ENCODE measurements at regions of chr16 and their contacts with region 1.

Region 1: GRCh38 chr16:57462209-57462977 is at the start of gene POLR2C:
- DNase-seq: peak; percentile 60 to 95
- H3K4me3 ChIP-seq: peak within 1 kb of the TSS; percentile 93 to 97 (median 96)
- H3K27ac ChIP-seq: no peak within 1 kb of the TSS
- H3K4me1 ChIP-seq: no peaks in the 10 kb centered on the region; a peak in 2 of 7 replicates
- H3K27me3 ChIP-seq: no peaks in the 10 kb centered on the region
- CTCF ChIP-seq: peak; percentile 86 to 97 (median 94)
- EP300 ChIP-seq: peak in 1 of 2 experiments; percentile 51; a peak in 1 of 3 replicates
- POLR2A ChIP-seq: peak; percentile 96 to 97
- RAD21 ChIP-seq: peak; percentile 27 to 55; a peak in 3 of 4 replicates
- total RNA-seq, gene POLR2C: 71.2 and 72.5 TPM in 2 replicates

Region 2: DNA sequence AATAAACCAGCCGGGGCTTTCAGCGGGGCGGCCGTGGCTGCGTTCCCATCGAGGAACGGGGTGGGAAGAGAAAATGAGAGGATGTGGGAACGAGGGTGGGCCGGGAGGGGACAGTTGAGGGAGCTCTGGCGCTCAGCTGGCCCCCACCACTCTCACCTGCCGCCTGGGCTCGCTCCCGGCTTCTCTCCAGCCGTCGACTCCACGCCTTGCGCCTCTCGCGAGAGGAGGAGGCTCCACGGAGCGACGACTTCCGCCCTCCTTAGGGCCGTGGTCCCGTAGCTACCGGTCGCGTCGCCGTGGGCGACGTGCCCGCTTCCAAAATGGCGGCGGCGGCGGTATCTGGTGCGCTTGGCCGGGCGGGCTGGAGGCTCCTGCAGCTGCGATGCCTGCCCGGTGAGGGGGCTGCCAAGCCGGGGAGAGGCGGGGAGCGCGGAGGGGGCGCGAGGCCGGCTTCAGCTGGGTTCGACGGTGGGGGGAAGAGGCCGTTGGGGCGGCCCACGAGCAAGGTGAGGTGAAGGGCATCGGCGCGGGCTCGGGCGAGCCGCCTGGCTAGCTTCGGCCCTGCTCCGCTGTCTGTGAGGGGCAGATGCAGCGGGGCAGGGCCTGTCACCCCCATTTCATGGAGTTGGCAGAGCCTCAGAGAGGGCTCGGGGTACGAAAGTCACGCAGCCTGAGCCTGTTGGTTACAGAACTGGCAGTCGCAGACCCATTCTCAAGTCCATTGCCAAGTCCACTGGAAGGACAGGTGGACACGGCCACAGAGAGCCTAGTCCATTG is 15.0 kb before region 1 on chr16 and contains the starts of genes CIAPIN1 and COQ9:
- CTCF ChIA-PET with region 1: interaction called, 8 read pairs
- POLR2A ChIA-PET with region 1: interaction called, 20 read pairs
- DNase-seq: peak; percentile 73 to 90
- H3K4me3 ChIP-seq: peak within 1 kb of the TSS; percentile 80 to 97 (median 96)
- H3K27ac ChIP-seq: peak within 1 kb of the TSS; percentile 73
- H3K4me1 ChIP-seq: peaks cover 0 to 3% (median 3%) of the 10 kb centered on the region in 4 experiments; a peak in 5 of 7 replicates
- H3K27me3 ChIP-seq: no peaks in the 10 kb centered on the region
- CTCF ChIP-seq: no peak
- EP300 ChIP-seq: no peak
- POLR2A ChIP-seq: peak; percentile 76 to 95
- RAD21 ChIP-seq: no peak
- total RNA-seq, gene CIAPIN1: 83.6 and 90.7 TPM in 2 replicates
- total RNA-seq, gene COQ9: 31.7 and 33.3 TPM in 2 replicates

Region 3: GRCh38 chr16:57507136-57508034 is 45.0 kb after region 1 on chr16:
- CTCF ChIA-PET with region 1: interaction called, 11 read pairs
- POLR2A ChIA-PET with region 1: interaction called, 4 read pairs
- DNase-seq: no peak
- H3K4me3 ChIP-seq: no peak overlapping the region
- H3K27ac ChIP-seq: no peak overlapping the region
- H3K4me1 ChIP-seq: peaks cover 0 to 17% (median 7%) of the 10 kb centered on the region in 4 experiments; a peak in 6 of 7 replicates
- H3K27me3 ChIP-seq: no peaks in the 10 kb centered on the region
- CTCF ChIP-seq: no peak
- EP300 ChIP-seq: no peak
- POLR2A ChIP-seq: no peak
- RAD21 ChIP-seq: no peak